ENCODE measurements at regions of chr10 and their contacts with region 1.

Region 1: GRCh38 chr10:133257489-133258065 is 19.1 kb downstream of the ADAM8 start:
- DNase-seq: peak; percentile 92
- H3K4me3 ChIP-seq: peak overlapping the region in 6 of 8 donors; percentile 1 to 54 (median 17)
- H3K27ac ChIP-seq: peak overlapping the region in 7 of 8 donors; percentile 61 to 89 (median 71)
- H3K4me1 ChIP-seq: peaks cover 29 to 65% (median 52%) of the 10 kb centered on the region in 6 donors
- H3K27me3 ChIP-seq: peaks cover 0 to 14% (median 0%) of the 10 kb centered on the region in 7 donors
- CTCF ChIP-seq: peak in 7 of 11 experiments; percentile 6 to 50 (median 43)
- POLR2A ChIP-seq: no peak

Region 2: GRCh38 chr10:133139551-133140065 is 118.0 kb before region 1 on chr10:
- intact Hi-C with region 1: loop called (anchors 10 kb)
- DNase-seq: peak; percentile 70
- H3K4me3 ChIP-seq: no peak overlapping the region
- H3K27ac ChIP-seq: no peak overlapping the region
- H3K4me1 ChIP-seq: peaks cover 0 to 3% (median 0%) of the 10 kb centered on the region in 6 donors
- H3K27me3 ChIP-seq: peaks cover 0 to 49% (median 12%) of the 10 kb centered on the region in 7 donors
- CTCF ChIP-seq: no peak
- POLR2A ChIP-seq: no peak

Measured in spleen (tissue), 13 donors.